Right cardiac atrium (tissue), 5 donors: ENCODE measurements at regions of chr4 and their contacts with region 1.

Region 1: GRCh38 chr4:78784236-78784865 is 8.2 kb downstream of the BMP2K start:
- DNase-seq: no peak
- ATAC-seq: peak; percentile 54 to 66
- H3K4me3 ChIP-seq: peak overlapping the region; percentile 28
- H3K27ac ChIP-seq: no peak overlapping the region
- H3K4me1 ChIP-seq: peaks cover 8% of the 10 kb centered on the region
- H3K27me3 ChIP-seq: no peaks in the 10 kb centered on the region

Region 2: DNA sequence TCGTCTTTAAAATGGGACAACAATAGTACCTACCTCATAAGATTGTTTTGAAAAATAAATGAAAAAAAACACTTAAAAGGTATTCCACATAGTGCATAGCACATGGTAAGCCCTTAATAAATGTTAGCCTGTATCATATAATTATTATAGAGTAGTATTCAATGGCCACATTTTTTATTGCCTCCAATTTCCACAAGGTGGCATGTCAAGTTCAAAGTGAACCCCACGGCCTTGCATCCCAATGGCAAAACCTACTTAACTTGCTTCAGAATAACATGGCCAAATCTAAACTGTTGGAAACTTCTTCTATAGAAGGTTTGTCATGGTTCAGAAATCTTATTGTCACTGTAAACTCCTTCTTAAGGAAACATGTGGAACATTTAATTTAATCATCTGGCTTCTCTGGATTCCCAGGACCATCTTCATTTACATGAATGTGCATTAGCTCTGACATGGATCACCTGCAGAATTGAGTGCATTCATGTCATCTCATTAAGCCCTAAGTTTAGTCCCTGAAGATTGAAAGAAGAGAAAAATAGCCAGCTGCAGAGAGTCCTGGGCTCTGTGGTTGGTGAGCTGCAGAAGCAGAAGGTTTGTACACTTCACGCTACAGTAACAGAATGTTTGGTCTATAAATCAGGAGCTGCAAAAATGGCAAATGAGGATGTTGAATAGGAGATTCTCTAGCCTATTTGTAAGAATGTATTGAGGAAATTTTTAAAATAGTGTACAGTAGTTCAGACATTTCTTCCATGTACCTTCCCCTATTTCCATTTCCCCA is 171.8 kb before region 1 on chr4:
- intact Hi-C with region 1: loop called in 2 of 4 experiments (anchors 10 kb)
- DNase-seq: peak in 1 of 3 donors; percentile 46
- ATAC-seq: peak; percentile 66 to 72
- H3K4me3 ChIP-seq: no peak overlapping the region
- H3K27ac ChIP-seq: no peak overlapping the region
- H3K4me1 ChIP-seq: peaks cover 2% of the 10 kb centered on the region
- H3K27me3 ChIP-seq: no peaks in the 10 kb centered on the region

Region 3: GRCh38 chr4:78864405-78865024 is 80.2 kb after region 1 on chr4:
- intact Hi-C with region 1: loop called in 2 of 4 experiments (anchors 10 kb)
- DNase-seq: no peak
- ATAC-seq: peak; percentile 59 to 61
- H3K4me3 ChIP-seq: no peak overlapping the region
- H3K27ac ChIP-seq: no peak overlapping the region
- H3K4me1 ChIP-seq: no peaks in the 10 kb centered on the region
- H3K27me3 ChIP-seq: no peaks in the 10 kb centered on the region